Psoas muscle (tissue), 8 donors: ENCODE measurements at regions of chr17 and their contacts with region 1.

Region 1: DNA sequence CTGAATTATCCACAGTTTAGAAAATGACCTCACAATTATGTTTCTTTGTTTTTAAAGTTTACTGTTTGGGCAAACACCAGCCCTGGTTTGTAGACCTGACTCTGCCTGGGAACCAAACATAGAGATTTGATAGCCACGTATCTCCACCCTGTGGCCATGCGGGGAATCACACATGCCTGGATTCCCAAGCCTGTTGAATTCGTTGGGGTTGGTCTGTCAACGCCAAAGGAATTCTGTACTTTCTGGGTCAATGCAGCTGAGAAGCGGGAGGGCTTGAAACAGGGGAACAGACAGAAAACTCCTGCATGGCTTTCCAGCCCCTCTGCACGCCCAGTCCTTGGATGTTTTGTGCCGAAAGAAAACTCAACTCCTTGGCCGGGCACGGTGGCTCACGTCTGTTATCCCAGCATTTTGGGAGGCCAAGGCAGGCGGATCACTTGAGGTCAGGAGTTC is 27.0 kb downstream of the CD300A start:
- DNase-seq: peak; percentile 61 to 81
- ATAC-seq: peak; percentile 89 to 98 (median 96)
- H3K4me3 ChIP-seq: no peak overlapping the region
- H3K27ac ChIP-seq: peak overlapping the region; percentile 4
- H3K4me1 ChIP-seq: peaks cover 14% of the 10 kb centered on the region
- H3K27me3 ChIP-seq: no peaks in the 10 kb centered on the region
- CTCF ChIP-seq: peak; percentile 95

Region 2: GRCh38 chr17:74212913-74213791 is 280.3 kb before region 1 on chr17 and contains the start of gene TTYH2:
- intact Hi-C with region 1: no loop called
- DNase-seq: peak; percentile 92 to 94
- ATAC-seq: peak; percentile 74 to 78 (median 75)
- H3K4me3 ChIP-seq: peak within 1 kb of the TSS; percentile 60
- H3K27ac ChIP-seq: peak within 1 kb of the TSS; percentile 96
- H3K4me1 ChIP-seq: peaks cover 44% of the 10 kb centered on the region
- H3K27me3 ChIP-seq: no peaks in the 10 kb centered on the region
- CTCF ChIP-seq: peak; percentile 33
- total RNA-seq, gene TTYH2: 5.1 to 16.4 (median 7.7) TPM

Region 3: GRCh38 chr17:74303305-74303704 is 190.1 kb before region 1 on chr17:
- intact Hi-C with region 1: loop called in 1 of 2 experiments (anchors 5 kb)
- DNase-seq: no peak
- ATAC-seq: no peak
- H3K4me3 ChIP-seq: no peak overlapping the region
- H3K27ac ChIP-seq: no peak overlapping the region
- H3K4me1 ChIP-seq: no peaks in the 10 kb centered on the region
- H3K27me3 ChIP-seq: no peaks in the 10 kb centered on the region
- CTCF ChIP-seq: no peak

Region 4: GRCh38 chr17:74340470-74341023 is 152.9 kb before region 1 on chr17:
- intact Hi-C with region 1: no loop called
- DNase-seq: no peak
- ATAC-seq: no peak
- H3K4me3 ChIP-seq: no peak overlapping the region
- H3K27ac ChIP-seq: no peak overlapping the region
- H3K4me1 ChIP-seq: no peaks in the 10 kb centered on the region
- H3K27me3 ChIP-seq: peaks cover 0 to 18% (median 4%) of the 10 kb centered on the region in 3 donors
- CTCF ChIP-seq: no peak

Region 5: DNA sequence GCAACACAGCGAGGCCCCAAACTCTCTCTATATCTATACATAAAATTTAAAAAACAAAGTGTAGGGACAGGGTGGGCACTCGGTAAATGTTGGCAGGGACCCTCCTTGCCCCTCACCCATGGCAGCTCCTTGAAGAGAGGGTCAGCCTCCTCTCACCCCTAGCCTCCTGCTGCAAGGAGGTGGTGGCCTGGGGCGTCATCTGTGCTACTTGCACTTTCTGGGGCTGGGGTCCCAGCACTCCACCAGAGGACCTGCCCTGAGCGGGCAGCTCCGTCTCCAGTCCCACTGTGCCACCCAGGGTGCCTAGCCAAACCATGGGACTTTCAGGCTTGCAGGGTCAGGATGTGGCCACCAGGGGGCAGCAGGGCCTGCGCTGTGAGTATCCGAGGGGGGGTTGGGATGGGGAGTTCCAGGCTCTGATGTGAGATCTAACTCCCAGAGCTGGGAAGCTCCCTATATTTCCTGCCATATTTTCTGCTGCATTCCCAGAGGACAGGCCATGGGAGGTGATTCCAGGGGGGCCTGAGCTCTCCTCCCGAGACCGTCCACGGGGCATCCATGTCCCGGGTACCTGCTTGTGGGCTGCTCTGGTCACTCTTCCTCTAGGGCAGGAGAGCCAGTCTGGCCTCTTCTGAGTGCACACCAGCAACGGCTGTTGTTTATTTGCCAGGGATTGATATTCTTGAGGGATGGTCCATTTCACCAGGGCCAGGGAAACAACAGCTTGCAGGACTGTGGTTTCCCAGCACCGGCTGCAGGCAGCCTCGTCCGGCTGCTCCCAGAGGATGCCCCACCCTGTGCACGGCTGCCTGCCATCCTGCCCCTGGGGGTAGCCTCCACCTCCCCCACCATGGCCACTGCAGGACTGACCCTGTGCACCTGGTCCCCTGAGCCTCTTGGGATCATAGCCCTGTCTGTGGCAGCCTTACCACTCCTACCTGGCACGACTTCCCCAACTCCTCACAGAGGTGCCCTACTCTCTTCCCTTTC is 125.0 kb before region 1 on chr17:
- intact Hi-C with region 1: loop called (anchors 2 to 5 kb)
- DNase-seq: peak; percentile 73 to 87
- ATAC-seq: peak; percentile 83 to 96 (median 91)
- H3K4me3 ChIP-seq: no peak overlapping the region
- H3K27ac ChIP-seq: no peak overlapping the region
- H3K4me1 ChIP-seq: no peaks in the 10 kb centered on the region
- H3K27me3 ChIP-seq: no peaks in the 10 kb centered on the region
- CTCF ChIP-seq: peak; percentile 89

Region 6: DNA sequence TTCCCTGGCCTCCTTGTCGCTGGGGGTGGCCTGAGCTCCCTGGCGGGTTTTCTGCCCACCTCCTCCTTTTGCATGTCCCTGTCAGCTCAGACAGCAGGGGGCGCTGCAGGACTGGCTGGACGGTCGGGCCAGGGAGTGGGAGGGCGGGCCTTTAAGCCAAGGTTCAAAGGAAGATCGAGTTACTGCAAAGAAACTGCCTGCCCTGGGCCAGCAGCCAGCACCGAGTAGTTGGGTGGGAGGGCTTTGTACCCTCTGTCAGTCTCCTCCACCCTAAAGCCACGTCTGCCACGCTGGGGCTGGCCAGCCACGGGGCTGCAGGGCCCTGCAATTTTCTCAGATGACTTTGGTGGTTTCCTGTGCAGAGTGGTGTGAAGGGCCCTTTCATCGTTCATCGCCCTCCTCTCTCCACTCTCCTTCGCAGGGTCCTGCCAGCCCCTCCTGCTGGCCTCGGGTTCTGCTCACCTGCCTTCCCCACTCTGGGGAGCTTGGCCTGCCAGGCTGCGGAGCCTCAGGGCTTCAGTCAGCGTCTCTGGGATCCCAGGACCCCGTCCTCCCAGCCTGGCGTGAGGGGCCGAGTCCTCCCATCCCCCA is 113.8 kb before region 1 on chr17:
- intact Hi-C with region 1: loop called in 1 of 2 experiments (anchors 1 kb)
- DNase-seq: peak; percentile 93 to 97
- ATAC-seq: peak; percentile 89 to 94 (median 91)
- H3K4me3 ChIP-seq: peak overlapping the region; percentile 48
- H3K27ac ChIP-seq: peak overlapping the region; percentile 84
- H3K4me1 ChIP-seq: peaks cover 24% of the 10 kb centered on the region
- H3K27me3 ChIP-seq: no peaks in the 10 kb centered on the region
- CTCF ChIP-seq: peak; percentile 97

Region 7: DNA sequence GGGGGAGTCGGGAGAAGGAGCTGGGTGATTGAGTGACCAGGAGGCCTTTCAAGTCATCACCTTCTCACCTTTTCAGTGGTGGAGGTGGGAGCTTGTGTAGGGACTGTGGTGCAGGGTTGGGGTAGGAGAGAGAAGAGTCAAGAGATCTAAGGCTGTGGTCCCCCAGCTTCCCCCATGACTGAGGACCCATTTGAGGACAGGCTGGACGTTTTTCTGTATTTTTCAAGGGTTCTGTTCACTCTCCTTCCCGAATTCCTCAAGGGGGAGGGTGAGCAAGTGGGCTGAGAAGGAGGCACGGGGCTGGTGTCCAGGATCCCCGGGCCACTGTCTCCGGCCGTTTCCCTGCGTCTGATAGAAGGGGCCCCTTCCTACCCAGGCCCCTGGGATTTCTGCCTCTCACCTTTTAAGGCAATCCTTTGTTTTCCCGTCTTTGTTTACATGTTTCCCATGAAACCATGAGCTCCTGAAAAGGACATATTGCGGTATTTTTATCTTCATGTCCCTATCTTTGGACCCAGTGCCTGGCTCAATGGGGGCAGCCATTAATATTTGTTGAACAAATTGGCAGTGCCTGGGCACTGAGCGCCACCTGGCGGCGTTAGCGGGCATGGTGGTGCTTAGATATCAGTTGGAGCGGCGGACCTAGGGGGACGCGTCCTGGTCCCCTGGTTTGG is 36.1 kb before region 1 on chr17:
- intact Hi-C with region 1: loop called (anchors 1 to 5 kb)
- DNase-seq: peak; percentile 83 to 91
- ATAC-seq: peak; percentile 43 to 62 (median 50)
- H3K4me3 ChIP-seq: peak overlapping the region; percentile 34
- H3K27ac ChIP-seq: peak overlapping the region; percentile 63
- H3K4me1 ChIP-seq: peaks cover 32% of the 10 kb centered on the region
- H3K27me3 ChIP-seq: no peaks in the 10 kb centered on the region
- CTCF ChIP-seq: peak; percentile 93